Activated CD8-positive, alpha-beta memory T cell treated with anti-CD3 and anti-CD28 coated beads, Interleukin-2, amount 10 ng/mL, durations not matched to agents 7 days and 5 days (primary cell): ENCODE measurements at regions of chr15 and their contacts with region 1.

Region 1: DNA sequence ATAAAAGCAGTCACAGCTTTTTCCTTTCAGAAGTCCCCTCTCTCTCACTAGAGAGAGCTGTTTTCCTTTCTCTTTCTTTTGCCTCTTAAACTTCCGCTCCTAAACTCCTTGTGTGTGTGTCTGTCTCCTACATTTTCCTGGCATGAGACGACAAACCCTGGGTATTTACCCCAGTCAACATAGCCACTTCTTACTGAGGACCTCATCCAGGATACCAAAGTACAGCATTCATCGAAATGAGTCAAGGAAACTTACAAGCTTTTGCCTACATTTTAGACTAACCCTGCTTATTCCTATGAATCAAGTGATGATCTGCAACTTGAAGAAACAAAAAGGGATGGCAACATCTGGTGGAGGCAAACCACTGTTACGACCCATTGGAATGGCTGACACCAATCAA is 16.7 kb downstream of the PATL2 start:
- DNase-seq: no peak
- ATAC-seq: no peak
- H3K4me3 Mint-ChIP-seq: no peak overlapping the region
- H3K27ac Mint-ChIP-seq: no peak overlapping the region
- H3K4me1 Mint-ChIP-seq: peaks cover 20% of the 10 kb centered on the region
- H3K27me3 Mint-ChIP-seq: peaks cover 5% of the 10 kb centered on the region

Region 2: GRCh38 chr15:44397869-44398268 is 296.5 kb before region 1 on chr15:
- CTCF ChIA-PET with region 1: no interaction called
- DNase-seq: no peak
- ATAC-seq: no peak
- H3K4me3 Mint-ChIP-seq: no peak overlapping the region
- H3K27ac Mint-ChIP-seq: no peak overlapping the region
- H3K4me1 Mint-ChIP-seq: peaks cover 12% of the 10 kb centered on the region
- H3K27me3 Mint-ChIP-seq: no peaks in the 10 kb centered on the region

Region 3: DNA sequence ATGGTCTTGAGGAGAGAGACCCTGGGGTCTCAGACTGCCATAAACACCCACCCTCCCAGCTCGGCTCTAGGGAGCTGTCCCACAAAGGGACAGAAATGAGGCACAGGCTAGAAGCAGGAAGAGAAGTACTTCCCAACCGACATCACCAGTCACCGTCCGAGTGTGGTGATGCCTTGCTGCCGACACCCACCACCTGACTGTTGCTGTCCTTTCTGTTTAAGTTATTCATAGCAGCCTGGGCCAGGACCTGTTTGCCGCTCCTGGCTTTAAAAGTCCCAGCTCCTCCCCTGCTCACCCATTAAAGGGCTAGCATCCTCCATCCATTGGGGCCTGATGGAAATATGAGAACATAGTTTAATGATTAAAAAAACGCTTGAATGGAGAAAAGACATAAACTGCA is 17.7 kb before region 1 on chr15:
- CTCF ChIA-PET with region 1: interaction called, 10 read pairs
- DNase-seq: peak; percentile 77
- ATAC-seq: peak; percentile 54
- H3K4me3 Mint-ChIP-seq: peak overlapping the region; percentile 60
- H3K27ac Mint-ChIP-seq: peak overlapping the region; percentile 92
- H3K4me1 Mint-ChIP-seq: peaks cover 76% of the 10 kb centered on the region
- H3K27me3 Mint-ChIP-seq: no peaks in the 10 kb centered on the region